OCI-LY7 (cell line): ENCODE measurements at regions of chr5 and their contacts with region 1.

Region 1: DNA sequence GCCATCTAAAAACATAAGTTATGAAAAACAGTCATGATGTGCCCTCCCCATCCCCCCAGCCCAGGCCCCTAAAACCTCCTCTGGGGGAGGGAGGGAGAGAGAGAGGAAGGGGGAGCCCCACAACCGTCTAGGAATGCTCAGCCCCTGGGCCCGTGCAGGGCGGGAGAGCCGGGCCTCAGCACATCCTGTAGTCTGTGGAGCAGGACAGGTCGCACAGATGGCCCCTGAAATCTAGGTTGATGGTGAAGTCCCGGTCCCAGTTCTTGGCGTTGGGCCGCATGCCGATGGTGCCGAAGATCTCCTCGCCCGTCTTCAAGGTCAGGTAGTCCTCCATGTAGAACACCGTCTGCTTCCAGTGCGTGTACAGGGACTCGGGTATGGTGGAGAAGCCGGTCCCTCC is 38.1 kb downstream of the RAB24 start:
- DNase-seq: no peak
- H3K4me3 ChIP-seq: no peak overlapping the region
- H3K27ac ChIP-seq: no peak overlapping the region
- H3K4me1 ChIP-seq: no peaks in the 10 kb centered on the region
- CTCF ChIP-seq: no peak

Region 2: GRCh38 chr5:177276886-177277285 is 11.5 kb after region 1 on chr5:
- CTCF ChIA-PET with region 1: no interaction called
- POLR2A ChIA-PET with region 1: interaction called, 13 read pairs
- intact Hi-C with region 1: no loop called
- DNase-seq: no peak
- H3K4me3 ChIP-seq: no peak overlapping the region
- H3K27ac ChIP-seq: no peak overlapping the region
- H3K4me1 ChIP-seq: no peaks in the 10 kb centered on the region
- CTCF ChIP-seq: no peak

Region 3: DNA sequence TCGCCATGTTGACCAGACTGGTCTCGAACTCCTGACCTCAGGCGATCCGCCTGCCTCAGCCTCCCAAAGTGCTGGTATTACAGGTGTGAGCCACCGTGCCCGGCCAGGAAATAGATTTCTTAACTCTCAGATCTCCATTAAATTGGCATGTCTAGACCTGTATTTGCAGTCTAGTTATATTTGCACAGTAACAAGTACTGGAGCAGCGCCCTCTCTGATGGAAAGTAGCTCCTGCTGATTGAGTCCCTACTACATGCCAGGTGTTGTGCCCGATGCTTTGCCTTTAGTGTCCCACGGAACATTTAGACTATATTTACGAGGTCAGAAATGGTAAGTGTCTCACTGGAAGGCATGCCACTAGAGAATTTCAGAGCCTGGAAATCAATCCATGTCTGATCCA is 310.8 kb after region 1 on chr5:
- CTCF ChIA-PET with region 1: no interaction called
- POLR2A ChIA-PET with region 1: no interaction called
- intact Hi-C with region 1: no loop called
- DNase-seq: no peak
- H3K4me3 ChIP-seq: no peak overlapping the region
- H3K27ac ChIP-seq: no peak overlapping the region
- H3K4me1 ChIP-seq: no peaks in the 10 kb centered on the region
- CTCF ChIP-seq: peak; percentile 31; the same call in 1 of the 2 replicates

Region 4: GRCh38 chr5:177592010-177592834 is 326.8 kb after region 1 on chr5 and contains the start of gene TMED9:
- CTCF ChIA-PET with region 1: no interaction called
- POLR2A ChIA-PET with region 1: no interaction called
- intact Hi-C with region 1: no loop called
- DNase-seq: peak; percentile 90
- H3K4me3 ChIP-seq: peak within 1 kb of the TSS; percentile 91
- H3K27ac ChIP-seq: peak within 1 kb of the TSS; percentile 73
- H3K4me1 ChIP-seq: peaks cover 16% of the 10 kb centered on the region
- CTCF ChIP-seq: no peak
- total RNA-seq, gene TMED9: 67.6 and 89.7 TPM in 2 replicates